B cell (primary cell): ENCODE measurements at regions of chr6 and their contacts with region 1.

Region 1: DNA sequence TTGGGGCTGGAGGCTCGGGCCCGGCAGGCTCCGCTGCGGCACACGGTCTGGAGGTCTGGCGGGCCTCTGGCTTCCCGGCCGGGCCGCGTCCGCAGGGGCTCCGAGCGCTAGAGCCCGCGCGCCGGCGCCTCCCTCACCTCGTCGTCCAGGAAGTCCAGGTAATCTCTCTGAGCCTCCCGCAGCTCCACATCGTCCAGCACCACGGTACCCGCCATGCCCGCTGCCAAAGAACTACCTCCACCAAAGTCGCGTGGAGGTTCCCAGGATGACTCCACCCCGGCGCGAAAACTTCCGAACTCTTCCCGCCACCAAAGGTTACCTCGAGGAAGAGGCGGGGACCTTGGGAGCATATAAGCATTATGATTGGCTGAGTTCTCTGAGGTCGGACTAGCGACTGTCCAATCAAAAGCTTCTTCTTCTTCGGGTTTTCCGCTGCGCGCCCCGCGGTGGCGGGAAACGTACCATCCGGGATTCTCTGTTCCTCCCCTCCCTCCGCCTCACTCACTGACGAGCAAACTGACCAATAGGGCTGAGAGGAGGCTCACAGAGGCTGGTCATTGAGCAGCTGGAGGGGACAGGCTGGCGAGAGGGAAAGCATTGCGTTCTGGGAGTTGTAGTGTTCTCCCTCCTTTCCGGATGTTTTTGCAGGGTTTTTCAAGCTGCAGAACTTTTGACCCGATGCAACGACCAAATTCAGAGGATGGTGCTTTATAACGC is at the start of gene MCM3:
- DNase-seq: peak; percentile 98
- ATAC-seq: peak; percentile 97
- H3K4me3 ChIP-seq: peak within 1 kb of the TSS; percentile 67 to 83 (median 80)
- H3K4me3 Mint-ChIP-seq: peak within 1 kb of the TSS; percentile 72
- H3K27ac ChIP-seq: peak within 1 kb of the TSS; percentile 50 to 79
- H3K27ac Mint-ChIP-seq: no peak within 1 kb of the TSS
- H3K4me1 ChIP-seq: peaks cover 15 to 19% of the 10 kb centered on the region in 2 donors
- H3K4me1 Mint-ChIP-seq: peaks cover 22% of the 10 kb centered on the region
- H3K27me3 ChIP-seq: no peaks in the 10 kb centered on the region
- H3K27me3 Mint-ChIP-seq: no peaks in the 10 kb centered on the region
- CTCF ChIP-seq: peak; percentile 5
- total RNA-seq, gene MCM3: 58.5 and 60.0 TPM in 2 replicates

Region 2: GRCh38 chr6:52263709-52264540 is 20.7 kb before region 1 on chr6:
- CTCF ChIA-PET with region 1: interaction called, 32 read pairs
- POLR2A ChIA-PET with region 1: no interaction called
- intact Hi-C with region 1: no loop called
- DNase-seq: peak; percentile 70
- ATAC-seq: peak; percentile 85
- H3K4me3 ChIP-seq: no peak overlapping the region
- H3K4me3 Mint-ChIP-seq: no peak overlapping the region
- H3K27ac ChIP-seq: no peak overlapping the region
- H3K27ac Mint-ChIP-seq: peak overlapping the region; percentile 23
- H3K4me1 ChIP-seq: no peaks in the 10 kb centered on the region
- H3K4me1 Mint-ChIP-seq: peaks cover 6% of the 10 kb centered on the region
- H3K27me3 ChIP-seq: no peaks in the 10 kb centered on the region
- H3K27me3 Mint-ChIP-seq: no peaks in the 10 kb centered on the region
- CTCF ChIP-seq: peak; percentile 97

Region 3: GRCh38 chr6:52352239-52353008 is 67.8 kb after region 1 on chr6:
- CTCF ChIA-PET with region 1: interaction called, 12 read pairs
- POLR2A ChIA-PET with region 1: no interaction called
- intact Hi-C with region 1: no loop called
- DNase-seq: peak; percentile 61
- ATAC-seq: peak; percentile 67
- H3K4me3 ChIP-seq: no peak overlapping the region
- H3K4me3 Mint-ChIP-seq: peak overlapping the region; percentile 9
- H3K27ac ChIP-seq: peak overlapping the region; percentile 20 to 61
- H3K27ac Mint-ChIP-seq: peak overlapping the region; percentile 68
- H3K4me1 ChIP-seq: peaks cover 26 to 35% of the 10 kb centered on the region in 2 donors
- H3K4me1 Mint-ChIP-seq: peaks cover 29% of the 10 kb centered on the region
- H3K27me3 ChIP-seq: no peaks in the 10 kb centered on the region
- H3K27me3 Mint-ChIP-seq: no peaks in the 10 kb centered on the region
- CTCF ChIP-seq: no peak

Region 4: DNA sequence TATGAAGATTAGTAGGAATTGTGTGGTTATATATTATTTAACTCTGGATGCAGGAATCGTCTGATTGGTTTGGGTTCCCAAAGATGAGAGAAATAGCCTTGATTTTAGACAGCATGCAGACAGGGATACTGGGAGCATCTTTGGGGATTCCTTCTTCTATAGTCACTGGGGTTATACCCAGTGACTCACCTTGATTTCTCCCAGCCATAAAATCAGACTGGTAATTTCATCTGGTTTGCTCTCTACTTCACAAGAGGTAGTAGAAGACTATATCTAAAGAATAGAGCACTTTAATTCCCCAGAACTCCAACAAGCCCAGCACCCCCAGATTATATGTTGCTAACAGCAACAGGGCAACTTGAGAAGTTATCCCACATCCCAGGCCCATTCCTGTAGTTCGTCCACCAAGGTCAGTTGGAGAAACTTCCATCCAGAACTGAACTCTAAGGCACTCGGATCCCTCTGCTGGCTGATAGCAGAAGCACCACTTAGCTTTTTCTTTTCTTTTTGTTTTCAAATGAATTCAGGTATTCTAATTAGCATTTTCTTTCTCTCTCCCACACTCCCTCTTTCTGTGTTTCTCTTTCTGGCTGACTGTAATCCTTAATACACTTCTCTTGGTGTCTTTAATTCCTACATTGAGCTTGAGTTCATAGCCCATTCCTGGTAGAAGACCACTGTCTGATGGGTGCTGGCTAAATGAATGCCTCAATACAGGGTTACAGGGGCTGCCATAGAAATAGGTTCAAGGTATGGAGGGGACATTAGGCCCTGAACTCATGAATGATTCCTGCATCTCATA is 115.1 kb after region 1 on chr6:
- CTCF ChIA-PET with region 1: interaction called, 174 read pairs
- POLR2A ChIA-PET with region 1: interaction called, 5 read pairs
- intact Hi-C with region 1: loop called (anchors 1 kb)
- DNase-seq: peak; percentile 59
- ATAC-seq: peak; percentile 58
- H3K4me3 ChIP-seq: no peak overlapping the region
- H3K4me3 Mint-ChIP-seq: no peak overlapping the region
- H3K27ac ChIP-seq: no peak overlapping the region
- H3K27ac Mint-ChIP-seq: no peak overlapping the region
- H3K4me1 ChIP-seq: peaks cover 5 to 15% of the 10 kb centered on the region in 2 donors
- H3K4me1 Mint-ChIP-seq: peaks cover 28% of the 10 kb centered on the region
- H3K27me3 ChIP-seq: no peaks in the 10 kb centered on the region
- H3K27me3 Mint-ChIP-seq: no peaks in the 10 kb centered on the region
- CTCF ChIP-seq: peak; percentile 85

Region 5: GRCh38 chr6:52577022-52577777 is 292.6 kb after region 1 on chr6 and contains the start of gene TRAM2:
- CTCF ChIA-PET with region 1: interaction called, 5 read pairs
- POLR2A ChIA-PET with region 1: no interaction called
- intact Hi-C with region 1: loop called (anchors 1 kb)
- DNase-seq: peak; percentile 89
- ATAC-seq: peak; percentile 79
- H3K4me3 ChIP-seq: peak within 1 kb of the TSS; percentile 63 to 88 (median 79)
- H3K4me3 Mint-ChIP-seq: peak within 1 kb of the TSS; percentile 94
- H3K27ac ChIP-seq: peak within 1 kb of the TSS; percentile 66 to 92
- H3K27ac Mint-ChIP-seq: peak within 1 kb of the TSS; percentile 83
- H3K4me1 ChIP-seq: peaks cover 32 to 35% of the 10 kb centered on the region in 2 donors
- H3K4me1 Mint-ChIP-seq: peaks cover 46% of the 10 kb centered on the region
- H3K27me3 ChIP-seq: no peaks in the 10 kb centered on the region
- H3K27me3 Mint-ChIP-seq: no peaks in the 10 kb centered on the region
- CTCF ChIP-seq: no peak
- total RNA-seq, gene TRAM2: 13.3 and 14.0 TPM in 2 replicates

Region 6: GRCh38 chr6:52995913-52996645 is 711.5 kb after region 1 on chr6:
- CTCF ChIA-PET with region 1: no interaction called
- POLR2A ChIA-PET with region 1: no interaction called
- intact Hi-C with region 1: loop called (anchors 1 kb)
- DNase-seq: peak; percentile 76
- ATAC-seq: no peak
- H3K4me3 ChIP-seq: peak overlapping the region; percentile 14 to 58 (median 47)
- H3K4me3 Mint-ChIP-seq: peak overlapping the region; percentile 98
- H3K27ac ChIP-seq: peak overlapping the region; percentile 43 to 95
- H3K27ac Mint-ChIP-seq: peak overlapping the region; percentile 100
- H3K4me1 ChIP-seq: peaks cover 8 to 14% of the 10 kb centered on the region in 2 donors
- H3K4me1 Mint-ChIP-seq: peaks cover 23% of the 10 kb centered on the region
- H3K27me3 ChIP-seq: no peaks in the 10 kb centered on the region
- H3K27me3 Mint-ChIP-seq: peaks cover 4% of the 10 kb centered on the region
- CTCF ChIP-seq: no peak

Region 7: DNA sequence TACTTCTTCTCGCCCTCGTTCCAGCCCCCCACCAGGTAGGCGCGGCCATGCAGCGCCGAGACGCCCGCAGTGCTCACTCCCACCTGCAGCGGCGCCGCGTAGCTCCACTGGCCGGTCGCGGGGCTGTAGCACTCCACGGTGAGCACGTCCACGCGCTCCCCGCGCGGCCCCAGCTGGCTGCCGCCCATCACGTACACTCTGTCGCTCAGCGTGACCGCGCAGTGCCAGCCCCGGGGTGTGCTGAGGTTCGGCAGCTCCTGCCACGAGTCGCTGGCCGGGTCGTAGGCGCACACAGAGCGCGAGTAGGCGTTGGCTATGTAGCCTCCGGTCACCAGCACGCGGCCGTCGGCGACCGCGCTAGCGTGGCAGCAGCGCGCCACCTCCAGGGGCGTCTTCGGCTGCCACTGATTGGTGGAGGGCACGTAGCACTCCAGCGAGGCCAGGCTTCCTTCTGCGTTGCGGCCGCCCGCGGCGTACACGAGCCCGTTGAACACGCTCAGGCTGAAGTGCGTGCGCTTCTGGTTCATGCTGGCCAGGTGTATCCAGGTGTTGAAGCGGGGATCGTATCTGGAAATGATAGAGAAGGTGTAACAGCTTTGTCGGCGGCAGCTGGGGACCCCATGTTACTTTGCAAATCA is 1367.3 kb after region 1 on chr6:
- CTCF ChIA-PET with region 1: interaction called, 3 read pairs
- POLR2A ChIA-PET with region 1: no interaction called
- intact Hi-C with region 1: loop called (anchors 2 kb)
- DNase-seq: peak; percentile 87
- ATAC-seq: peak; percentile 83
- H3K4me3 ChIP-seq: peak overlapping the region; percentile 64 to 96 (median 79)
- H3K4me3 Mint-ChIP-seq: peak overlapping the region; percentile 96
- H3K27ac ChIP-seq: peak overlapping the region; percentile 9 to 51
- H3K27ac Mint-ChIP-seq: peak overlapping the region; percentile 90
- H3K4me1 ChIP-seq: peaks cover 20 to 26% of the 10 kb centered on the region in 2 donors
- H3K4me1 Mint-ChIP-seq: peaks cover 20% of the 10 kb centered on the region
- H3K27me3 ChIP-seq: peaks cover 0 to 6% (median 0%) of the 10 kb centered on the region in 4 experiments
- H3K27me3 Mint-ChIP-seq: no peaks in the 10 kb centered on the region
- CTCF ChIP-seq: peak; percentile 24